OCI-LY7 (cell line): ENCODE measurements at regions of chr2 and their contacts with region 1.

Region 1: GRCh38 chr2:117835990-117836760 is 21.7 kb downstream of the DDX18 start:
- DNase-seq: peak; percentile 68
- H3K4me3 ChIP-seq: no peak overlapping the region
- H3K27ac ChIP-seq: no peak overlapping the region
- H3K4me1 ChIP-seq: peaks cover 4% of the 10 kb centered on the region
- CTCF ChIP-seq: peak; percentile 77

Region 2: GRCh38 chr2:117917223-117917917 is 81.2 kb after region 1 on chr2:
- CTCF ChIA-PET with region 1: no interaction called
- POLR2A ChIA-PET with region 1: interaction called, 3 read pairs
- intact Hi-C with region 1: loop called (anchors 5 kb)
- DNase-seq: no peak
- H3K4me3 ChIP-seq: peak overlapping the region; percentile 28
- H3K27ac ChIP-seq: peak overlapping the region; percentile 100
- H3K4me1 ChIP-seq: peaks cover 56% of the 10 kb centered on the region
- CTCF ChIP-seq: 0 out of 2 replicates have a peak, but pooled peaks have one; percentile 21

Region 3: GRCh38 chr2:117985092-117985491 is 148.9 kb after region 1 on chr2:
- CTCF ChIA-PET with region 1: no interaction called
- POLR2A ChIA-PET with region 1: interaction called, 3 read pairs
- intact Hi-C with region 1: loop called (anchors 5 kb)
- DNase-seq: no peak
- H3K4me3 ChIP-seq: no peak overlapping the region
- H3K27ac ChIP-seq: no peak overlapping the region
- H3K4me1 ChIP-seq: no peaks in the 10 kb centered on the region
- CTCF ChIP-seq: 0 out of 2 replicates have a peak, but pooled peaks have one; percentile 18